Activated B cell treated with CpG ODN at 0.5 μM for 24 hours (primary cell): ENCODE measurements at regions of chr17 and their contacts with region 1.

Region 1: GRCh38 chr17:39754161-39754951 is 16.6 kb downstream of the GRB7 start:
- DNase-seq: peak; percentile 99
- ATAC-seq: peak; percentile 70
- H3K4me3 Mint-ChIP-seq: peak overlapping the region; percentile 77
- H3K27ac Mint-ChIP-seq: peak overlapping the region; percentile 97
- H3K4me1 Mint-ChIP-seq: peaks cover 64% of the 10 kb centered on the region
- H3K27me3 Mint-ChIP-seq: no peaks in the 10 kb centered on the region
- CTCF ChIP-seq: peak; percentile 41

Region 2: GRCh38 chr17:39527220-39527813 is 227.0 kb before region 1 on chr17:
- CTCF ChIA-PET with region 1: no interaction called
- POLR2A ChIA-PET with region 1: no interaction called
- intact Hi-C with region 1: loop called (anchors 1 kb)
- DNase-seq: no peak
- ATAC-seq: no peak
- H3K4me3 Mint-ChIP-seq: no peak overlapping the region
- H3K27ac Mint-ChIP-seq: no peak overlapping the region
- H3K4me1 Mint-ChIP-seq: no peaks in the 10 kb centered on the region
- H3K27me3 Mint-ChIP-seq: no peaks in the 10 kb centered on the region
- CTCF ChIP-seq: no peak

Region 3: GRCh38 chr17:39668199-39668966 is 86.0 kb before region 1 on chr17 and contains the start of gene PNMT:
- CTCF ChIA-PET with region 1: interaction called, 4 read pairs
- POLR2A ChIA-PET with region 1: no interaction called
- intact Hi-C with region 1: loop called (anchors 2 kb)
- DNase-seq: peak; percentile 70
- ATAC-seq: peak; percentile 83
- H3K4me3 Mint-ChIP-seq: peak within 1 kb of the TSS; percentile 71
- H3K27ac Mint-ChIP-seq: peak within 1 kb of the TSS; percentile 56
- H3K4me1 Mint-ChIP-seq: peaks cover 31% of the 10 kb centered on the region
- H3K27me3 Mint-ChIP-seq: peaks cover 12% of the 10 kb centered on the region
- CTCF ChIP-seq: peak; percentile 44
- total RNA-seq, gene PNMT: not detected in 2 replicates

Region 4: DNA sequence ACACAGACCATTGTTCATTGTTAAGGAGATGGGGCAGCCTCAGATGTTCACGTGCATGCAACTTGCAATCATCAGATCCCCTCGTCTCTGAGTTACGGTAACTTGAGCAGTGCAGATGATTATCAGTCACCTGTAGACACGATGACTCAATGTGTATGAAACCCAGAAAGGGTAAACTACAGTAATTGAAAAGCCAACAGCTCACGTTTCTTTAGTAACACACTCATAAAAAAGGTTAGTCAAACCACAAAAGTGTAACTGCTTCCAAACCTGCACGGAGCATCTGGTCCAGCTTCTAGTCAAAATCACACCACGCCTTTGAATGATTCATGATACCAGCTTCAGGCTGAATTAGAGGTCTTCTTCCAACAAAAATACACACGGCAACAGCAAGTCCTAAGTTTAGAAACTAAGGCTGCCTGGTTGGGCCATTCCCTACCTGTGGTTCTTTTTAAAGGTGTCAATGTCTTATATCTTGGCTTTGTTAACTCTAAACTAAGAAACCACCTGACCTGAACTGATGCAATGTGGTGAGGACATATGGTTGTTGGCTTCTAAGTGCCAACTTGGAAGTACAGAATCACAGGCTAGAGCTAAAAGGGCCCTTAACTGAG is 15.7 kb after region 1 on chr17:
- CTCF ChIA-PET with region 1: interaction called, 10 read pairs
- POLR2A ChIA-PET with region 1: interaction called, 308 read pairs
- intact Hi-C with region 1: loop called (anchors 1 kb)
- DNase-seq: no peak
- ATAC-seq: peak; percentile 68
- H3K4me3 Mint-ChIP-seq: peak overlapping the region; percentile 58
- H3K27ac Mint-ChIP-seq: peak overlapping the region; percentile 96
- H3K4me1 Mint-ChIP-seq: peaks cover 99% of the 10 kb centered on the region
- H3K27me3 Mint-ChIP-seq: no peaks in the 10 kb centered on the region
- CTCF ChIP-seq: no peak

Region 5: DNA sequence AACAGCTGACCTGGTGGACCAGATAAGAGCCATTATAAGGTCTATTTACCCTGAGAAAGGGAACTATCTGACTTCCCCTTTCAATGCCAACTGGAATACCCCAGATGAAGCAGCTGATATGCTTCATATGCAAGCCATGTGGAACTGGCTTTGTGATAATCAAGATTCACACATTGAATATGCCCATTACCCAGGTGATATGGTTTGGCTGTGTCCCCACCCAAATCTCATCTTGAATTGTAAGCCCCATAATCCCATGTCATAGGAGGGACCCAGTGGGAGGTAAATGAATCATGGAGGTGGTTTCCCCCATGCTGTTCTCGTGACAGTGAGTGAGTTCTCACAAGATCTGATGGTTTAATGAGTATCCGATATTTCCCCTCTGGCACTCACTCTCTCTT is 67.7 kb after region 1 on chr17:
- CTCF ChIA-PET with region 1: interaction called, 14 read pairs
- POLR2A ChIA-PET with region 1: interaction called, 72 read pairs
- intact Hi-C with region 1: loop called (anchors 1 kb)
- DNase-seq: no peak
- ATAC-seq: peak; percentile 70
- H3K4me3 Mint-ChIP-seq: peak overlapping the region; percentile 45
- H3K27ac Mint-ChIP-seq: peak overlapping the region; percentile 95
- H3K4me1 Mint-ChIP-seq: peaks cover 65% of the 10 kb centered on the region
- H3K27me3 Mint-ChIP-seq: no peaks in the 10 kb centered on the region
- CTCF ChIP-seq: no peak

Region 6: DNA sequence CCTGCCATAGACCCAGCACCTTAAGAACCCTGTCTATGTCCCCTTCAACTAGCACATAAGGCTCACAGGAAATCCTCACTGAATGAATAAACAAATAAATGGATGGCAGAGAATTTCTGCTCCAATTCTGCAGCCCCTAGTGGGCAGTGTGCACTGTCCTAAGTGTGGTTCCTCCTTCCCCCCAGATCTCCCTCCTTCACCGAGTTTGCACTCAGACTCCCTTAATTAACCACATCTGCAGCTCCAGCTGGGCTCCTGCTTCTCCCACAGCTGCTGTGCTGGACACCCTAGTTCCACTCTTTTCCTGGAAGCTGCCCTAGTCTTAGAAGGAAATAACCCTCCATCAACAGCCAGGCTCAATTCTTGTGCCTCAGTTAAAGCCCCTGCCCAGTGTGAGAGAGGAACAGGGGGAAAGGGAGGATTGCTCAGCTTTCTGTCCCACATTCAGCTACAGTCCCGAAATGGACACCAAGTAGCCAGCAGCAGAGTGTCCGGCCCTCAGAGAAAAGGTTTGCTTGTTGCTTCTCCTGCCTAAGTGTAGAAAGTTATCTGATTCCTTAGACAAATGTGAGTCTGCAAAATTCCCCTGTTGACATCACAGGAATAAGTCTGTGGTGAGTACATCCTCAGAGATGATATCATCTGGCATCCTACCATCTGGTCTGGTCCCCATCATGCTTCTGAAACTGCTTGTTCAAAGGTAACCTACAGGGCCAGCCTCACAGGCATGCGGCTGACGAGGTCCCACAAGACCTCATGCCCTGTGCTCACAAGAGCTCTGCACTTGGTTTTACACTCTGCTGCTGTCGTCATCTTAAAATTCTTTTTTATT is 185.4 kb after region 1 on chr17:
- CTCF ChIA-PET with region 1: no interaction called
- POLR2A ChIA-PET with region 1: no interaction called
- intact Hi-C with region 1: no loop called
- DNase-seq: no peak
- ATAC-seq: peak; percentile 70
- H3K4me3 Mint-ChIP-seq: no peak overlapping the region
- H3K27ac Mint-ChIP-seq: no peak overlapping the region
- H3K4me1 Mint-ChIP-seq: peaks cover 12% of the 10 kb centered on the region
- H3K27me3 Mint-ChIP-seq: no peaks in the 10 kb centered on the region
- CTCF ChIP-seq: no peak

Region 7: GRCh38 chr17:40098846-40099618 is 344.7 kb after region 1 on chr17:
- CTCF ChIA-PET with region 1: no interaction called
- POLR2A ChIA-PET with region 1: no interaction called
- intact Hi-C with region 1: loop called (anchors 1 kb)
- DNase-seq: peak; percentile 95
- ATAC-seq: peak; percentile 64
- H3K4me3 Mint-ChIP-seq: peak overlapping the region; percentile 91
- H3K27ac Mint-ChIP-seq: peak overlapping the region; percentile 90
- H3K4me1 Mint-ChIP-seq: peaks cover 70% of the 10 kb centered on the region
- H3K27me3 Mint-ChIP-seq: no peaks in the 10 kb centered on the region
- CTCF ChIP-seq: no peak